ENCODE measurements at regions of chr18 and their contacts with region 1.

Region 1: DNA sequence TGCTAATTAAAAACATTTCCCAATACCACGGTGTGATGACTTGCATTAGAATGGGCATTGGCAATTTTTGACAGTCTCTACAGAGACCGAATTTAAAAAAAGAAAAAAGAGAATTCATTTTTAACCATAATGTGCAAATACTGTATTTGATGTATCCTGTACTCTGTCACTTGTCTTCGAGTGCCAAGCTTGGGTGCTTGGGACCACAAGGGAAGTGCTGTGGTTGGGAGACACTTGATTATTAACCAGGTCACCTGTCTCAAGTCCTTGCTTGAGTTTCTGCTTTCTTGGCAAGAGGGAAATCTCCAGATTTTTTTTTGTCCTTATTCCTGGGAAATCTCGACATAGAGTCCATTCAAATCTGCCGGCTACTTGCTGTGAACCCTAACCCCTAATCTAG is 209.0 kb downstream of the MC4R start:
- DNase-seq: no peak
- ATAC-seq: no peak

Region 2: GRCh38 chr18:60100778-60101177 is 62.8 kb before region 1 on chr18:
- intact Hi-C with region 1: loop called in 1 of 2 experiments (anchors 10 kb)
- DNase-seq: no peak
- ATAC-seq: no peak

Region 3: DNA sequence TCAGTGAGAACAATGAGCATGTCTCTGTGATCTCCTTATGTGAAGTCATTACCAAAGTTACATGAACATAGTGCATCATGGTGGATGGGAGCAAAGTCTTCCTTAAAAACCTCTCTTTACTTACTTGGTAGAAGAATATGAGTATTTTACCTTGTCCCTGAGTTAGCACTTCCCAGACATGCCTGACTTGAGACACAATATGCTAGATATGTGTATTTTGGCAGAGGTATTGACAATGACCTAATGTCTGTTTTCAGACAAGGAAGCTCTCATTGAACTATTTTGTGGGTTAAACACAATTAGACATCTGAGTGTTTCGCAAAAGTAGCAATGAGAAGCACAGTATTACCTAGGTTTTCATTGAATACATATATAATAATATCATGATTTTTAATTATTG is 308.0 kb after region 1 on chr18:
- intact Hi-C with region 1: no loop called
- DNase-seq: no peak
- ATAC-seq: peak in 1 of 2 donors; percentile 78

Measured in left cardiac atrium (tissue), 4 donors.